B cell (primary cell): ENCODE measurements at regions of chr2 and their contacts with region 1.

Region 1: GRCh38 chr2:224520064-224520463 is 65.1 kb downstream of the CUL3 start:
- DNase-seq: peak; percentile 33
- ATAC-seq: no peak
- H3K4me3 ChIP-seq: peak overlapping the region in 1 of 5 experiments; percentile 81
- H3K4me3 Mint-ChIP-seq: peak overlapping the region; percentile 81
- H3K27ac ChIP-seq: peak overlapping the region; percentile 87 to 89
- H3K27ac Mint-ChIP-seq: peak overlapping the region; percentile 91
- H3K4me1 ChIP-seq: peaks cover 73 to 78% of the 10 kb centered on the region in 2 donors
- H3K4me1 Mint-ChIP-seq: peaks cover 70% of the 10 kb centered on the region
- H3K27me3 ChIP-seq: no peaks in the 10 kb centered on the region
- H3K27me3 Mint-ChIP-seq: no peaks in the 10 kb centered on the region
- CTCF ChIP-seq: no peak

Region 2: DNA sequence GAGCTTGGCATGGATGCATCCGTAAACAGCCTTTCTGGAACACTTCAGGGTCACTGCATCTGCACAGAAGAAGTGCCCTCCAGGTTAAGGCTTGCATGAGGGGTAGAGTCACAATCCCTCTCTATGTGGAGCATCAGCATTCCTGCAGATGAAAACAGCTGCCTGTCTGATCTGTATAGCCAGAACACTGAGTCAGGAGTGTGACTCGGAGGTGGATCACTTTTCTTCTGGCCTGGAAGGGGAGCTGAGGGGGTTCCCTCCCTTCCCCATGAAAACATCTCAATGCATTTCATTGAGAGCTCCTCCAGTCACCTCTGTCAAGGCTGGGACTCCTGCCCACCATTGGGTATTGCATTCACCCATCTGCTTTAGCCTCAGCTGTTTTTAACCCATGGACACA is 408.5 kb before region 1 on chr2:
- CTCF ChIA-PET with region 1: no interaction called
- POLR2A ChIA-PET with region 1: no interaction called
- intact Hi-C with region 1: no loop called
- DNase-seq: no peak
- ATAC-seq: no peak
- H3K4me3 ChIP-seq: no peak overlapping the region
- H3K4me3 Mint-ChIP-seq: no peak overlapping the region
- H3K27ac ChIP-seq: no peak overlapping the region
- H3K27ac Mint-ChIP-seq: no peak overlapping the region
- H3K4me1 ChIP-seq: no peaks in the 10 kb centered on the region
- H3K4me1 Mint-ChIP-seq: no peaks in the 10 kb centered on the region
- H3K27me3 ChIP-seq: no peaks in the 10 kb centered on the region
- H3K27me3 Mint-ChIP-seq: peaks cover 31% of the 10 kb centered on the region
- CTCF ChIP-seq: no peak

Region 3: GRCh38 chr2:224389317-224389716 is 130.7 kb before region 1 on chr2:
- CTCF ChIA-PET with region 1: no interaction called
- POLR2A ChIA-PET with region 1: no interaction called
- intact Hi-C with region 1: no loop called
- DNase-seq: no peak
- ATAC-seq: no peak
- H3K4me3 ChIP-seq: no peak overlapping the region
- H3K4me3 Mint-ChIP-seq: no peak overlapping the region
- H3K27ac ChIP-seq: no peak overlapping the region
- H3K27ac Mint-ChIP-seq: no peak overlapping the region
- H3K4me1 ChIP-seq: no peaks in the 10 kb centered on the region
- H3K4me1 Mint-ChIP-seq: no peaks in the 10 kb centered on the region
- H3K27me3 ChIP-seq: no peaks in the 10 kb centered on the region
- H3K27me3 Mint-ChIP-seq: peaks cover 6% of the 10 kb centered on the region
- CTCF ChIP-seq: no peak

Region 4: GRCh38 chr2:224492531-224492930 is 27.5 kb before region 1 on chr2:
- CTCF ChIA-PET with region 1: no interaction called
- POLR2A ChIA-PET with region 1: interaction called, 9 read pairs
- intact Hi-C with region 1: loop called (anchors 5 kb)
- DNase-seq: no peak
- ATAC-seq: no peak
- H3K4me3 ChIP-seq: no peak overlapping the region
- H3K4me3 Mint-ChIP-seq: no peak overlapping the region
- H3K27ac ChIP-seq: no peak overlapping the region
- H3K27ac Mint-ChIP-seq: peak overlapping the region; percentile 33
- H3K4me1 ChIP-seq: peaks cover 10 to 14% of the 10 kb centered on the region in 2 donors
- H3K4me1 Mint-ChIP-seq: peaks cover 44% of the 10 kb centered on the region
- H3K27me3 ChIP-seq: no peaks in the 10 kb centered on the region
- H3K27me3 Mint-ChIP-seq: no peaks in the 10 kb centered on the region
- CTCF ChIP-seq: no peak

Region 5: GRCh38 chr2:224538561-224539154 is 18.6 kb after region 1 on chr2:
- CTCF ChIA-PET with region 1: interaction called, 5 read pairs
- POLR2A ChIA-PET with region 1: no interaction called
- intact Hi-C with region 1: loop called (anchors 2 kb)
- DNase-seq: no peak
- ATAC-seq: no peak
- H3K4me3 ChIP-seq: no peak overlapping the region
- H3K4me3 Mint-ChIP-seq: no peak overlapping the region
- H3K27ac ChIP-seq: peak overlapping the region in 1 of 2 donors; percentile 41
- H3K27ac Mint-ChIP-seq: no peak overlapping the region
- H3K4me1 ChIP-seq: peaks cover 0 to 4% of the 10 kb centered on the region in 2 donors
- H3K4me1 Mint-ChIP-seq: peaks cover 47% of the 10 kb centered on the region
- H3K27me3 ChIP-seq: no peaks in the 10 kb centered on the region
- H3K27me3 Mint-ChIP-seq: no peaks in the 10 kb centered on the region
- CTCF ChIP-seq: no peak

Region 6: GRCh38 chr2:224638301-224638823 is 118.3 kb after region 1 on chr2:
- CTCF ChIA-PET with region 1: interaction called, 5 read pairs
- POLR2A ChIA-PET with region 1: interaction called, 4 read pairs
- intact Hi-C with region 1: loop called (anchors 2 kb)
- DNase-seq: peak; percentile 75
- ATAC-seq: peak; percentile 89
- H3K4me3 ChIP-seq: peak overlapping the region in 3 of 5 experiments; percentile 1 to 38 (median 20)
- H3K4me3 Mint-ChIP-seq: peak overlapping the region; percentile 80
- H3K27ac ChIP-seq: peak overlapping the region; percentile 75 to 79
- H3K27ac Mint-ChIP-seq: peak overlapping the region; percentile 100
- H3K4me1 ChIP-seq: peaks cover 14 to 25% of the 10 kb centered on the region in 2 donors
- H3K4me1 Mint-ChIP-seq: peaks cover 16% of the 10 kb centered on the region
- H3K27me3 ChIP-seq: no peaks in the 10 kb centered on the region
- H3K27me3 Mint-ChIP-seq: no peaks in the 10 kb centered on the region
- CTCF ChIP-seq: no peak

Region 7: GRCh38 chr2:224691563-224691962 is 171.5 kb after region 1 on chr2:
- CTCF ChIA-PET with region 1: no interaction called
- POLR2A ChIA-PET with region 1: no interaction called
- intact Hi-C with region 1: no loop called
- DNase-seq: no peak
- ATAC-seq: no peak
- H3K4me3 ChIP-seq: no peak overlapping the region
- H3K4me3 Mint-ChIP-seq: no peak overlapping the region
- H3K27ac ChIP-seq: no peak overlapping the region
- H3K27ac Mint-ChIP-seq: no peak overlapping the region
- H3K4me1 ChIP-seq: no peaks in the 10 kb centered on the region
- H3K4me1 Mint-ChIP-seq: no peaks in the 10 kb centered on the region
- H3K27me3 ChIP-seq: no peaks in the 10 kb centered on the region
- H3K27me3 Mint-ChIP-seq: no peaks in the 10 kb centered on the region
- CTCF ChIP-seq: no peak